Activated naive CD4-positive, alpha-beta T cell treated with anti-CD3 and anti-CD28 coated beads for 36 hours (primary cell): ENCODE measurements at regions of chr11 and their contacts with region 1.

Region 1: DNA sequence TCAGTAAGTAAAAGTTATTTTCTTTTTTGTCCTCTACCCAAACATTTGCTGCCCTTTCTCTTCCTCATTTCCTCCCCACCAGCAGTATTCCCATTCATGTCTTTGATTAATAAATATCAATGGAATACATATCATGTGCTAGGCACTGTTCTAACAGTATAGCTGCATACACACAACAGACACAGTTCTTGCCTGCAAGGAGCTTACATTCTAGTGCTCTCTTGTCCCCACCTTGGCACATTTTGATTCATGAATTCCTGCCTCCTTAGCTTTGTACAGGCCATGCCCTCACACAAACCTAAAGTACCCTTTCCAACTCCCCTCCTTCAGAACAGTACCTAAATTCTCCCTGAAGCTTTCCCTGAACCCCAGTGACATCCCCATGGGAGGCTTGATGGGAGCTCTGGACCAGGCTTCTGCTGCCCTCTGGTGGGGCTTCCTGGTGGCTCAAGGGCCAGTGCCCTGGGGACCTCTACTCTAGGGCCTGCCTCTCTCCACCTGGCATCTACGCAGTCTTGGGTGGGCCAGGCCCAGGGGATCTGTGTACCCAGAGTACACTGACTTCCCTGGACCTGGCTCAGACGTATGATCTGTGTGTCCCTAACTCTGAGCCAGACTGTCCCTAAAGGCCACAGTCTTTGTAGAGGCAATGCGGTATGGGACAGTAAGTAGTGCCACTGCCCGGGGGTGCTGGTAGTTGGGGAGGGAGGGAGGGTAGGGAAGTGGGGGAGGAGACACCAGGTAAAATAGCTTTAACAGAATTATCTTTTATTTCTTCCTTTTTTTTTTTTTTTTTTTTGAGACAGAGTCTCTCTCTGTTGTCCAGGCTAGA is 14.1 kb downstream of the RPS13 start:
- DNase-seq: peak; percentile 74
- H3K4me3 Mint-ChIP-seq: no peak overlapping the region
- H3K27ac Mint-ChIP-seq: no peak overlapping the region
- H3K4me1 Mint-ChIP-seq: no peaks in the 10 kb centered on the region
- H3K27me3 Mint-ChIP-seq: no peaks in the 10 kb centered on the region

Region 2: DNA sequence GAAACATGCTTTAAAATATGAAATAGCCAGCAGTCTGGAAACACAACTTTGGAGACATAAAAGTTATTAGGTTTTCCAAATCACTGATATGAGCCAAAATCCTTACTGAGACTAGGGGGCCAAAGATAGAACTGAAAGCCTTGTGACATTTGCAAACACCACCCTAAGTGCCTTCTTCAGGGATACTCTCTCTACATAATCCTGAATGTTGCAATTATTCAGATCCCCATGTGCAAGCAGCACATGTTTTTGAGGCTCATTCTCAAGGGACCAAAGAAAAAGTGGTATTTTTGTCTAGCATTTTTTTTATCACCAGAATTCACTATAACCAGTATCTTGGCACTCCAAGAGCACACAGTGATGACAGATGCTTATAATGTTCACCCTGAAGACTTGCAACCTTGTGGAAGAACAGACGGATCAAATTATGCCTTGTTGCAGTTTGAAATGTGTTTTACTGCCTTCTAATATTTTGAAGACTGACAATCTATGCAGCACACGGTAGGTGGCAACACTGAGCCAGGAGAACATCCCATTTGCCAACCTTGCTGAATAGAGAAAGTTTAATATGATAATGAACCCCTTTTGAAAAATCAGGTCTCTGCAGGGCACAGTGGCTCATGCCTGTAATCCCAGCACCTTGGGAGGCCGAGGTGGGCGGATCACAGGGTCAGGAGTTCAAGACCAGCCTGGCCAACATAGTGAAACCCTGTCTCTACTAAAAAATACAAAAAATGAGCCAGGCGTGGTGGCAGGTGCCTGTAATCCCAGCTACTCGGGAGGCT is 127.7 kb before region 1 on chr11:
- CTCF ChIA-PET with region 1: interaction called, 23 read pairs
- intact Hi-C with region 1: loop called (anchors 1 kb)
- DNase-seq: peak; percentile 53
- H3K4me3 Mint-ChIP-seq: no peak overlapping the region
- H3K27ac Mint-ChIP-seq: no peak overlapping the region
- H3K4me1 Mint-ChIP-seq: no peaks in the 10 kb centered on the region
- H3K27me3 Mint-ChIP-seq: peaks cover 5% of the 10 kb centered on the region

Region 3: GRCh38 chr11:16945671-16946469 is 117.5 kb before region 1 on chr11:
- CTCF ChIA-PET with region 1: interaction called, 23 read pairs
- intact Hi-C with region 1: loop called (anchors 1 kb)
- DNase-seq: peak; percentile 70
- H3K4me3 Mint-ChIP-seq: no peak overlapping the region
- H3K27ac Mint-ChIP-seq: no peak overlapping the region
- H3K4me1 Mint-ChIP-seq: peaks cover 3% of the 10 kb centered on the region
- H3K27me3 Mint-ChIP-seq: no peaks in the 10 kb centered on the region